Cardiac septum (tissue), 1 donor: ENCODE measurements at regions of chr12 and their contacts with region 1.

Region 1: DNA sequence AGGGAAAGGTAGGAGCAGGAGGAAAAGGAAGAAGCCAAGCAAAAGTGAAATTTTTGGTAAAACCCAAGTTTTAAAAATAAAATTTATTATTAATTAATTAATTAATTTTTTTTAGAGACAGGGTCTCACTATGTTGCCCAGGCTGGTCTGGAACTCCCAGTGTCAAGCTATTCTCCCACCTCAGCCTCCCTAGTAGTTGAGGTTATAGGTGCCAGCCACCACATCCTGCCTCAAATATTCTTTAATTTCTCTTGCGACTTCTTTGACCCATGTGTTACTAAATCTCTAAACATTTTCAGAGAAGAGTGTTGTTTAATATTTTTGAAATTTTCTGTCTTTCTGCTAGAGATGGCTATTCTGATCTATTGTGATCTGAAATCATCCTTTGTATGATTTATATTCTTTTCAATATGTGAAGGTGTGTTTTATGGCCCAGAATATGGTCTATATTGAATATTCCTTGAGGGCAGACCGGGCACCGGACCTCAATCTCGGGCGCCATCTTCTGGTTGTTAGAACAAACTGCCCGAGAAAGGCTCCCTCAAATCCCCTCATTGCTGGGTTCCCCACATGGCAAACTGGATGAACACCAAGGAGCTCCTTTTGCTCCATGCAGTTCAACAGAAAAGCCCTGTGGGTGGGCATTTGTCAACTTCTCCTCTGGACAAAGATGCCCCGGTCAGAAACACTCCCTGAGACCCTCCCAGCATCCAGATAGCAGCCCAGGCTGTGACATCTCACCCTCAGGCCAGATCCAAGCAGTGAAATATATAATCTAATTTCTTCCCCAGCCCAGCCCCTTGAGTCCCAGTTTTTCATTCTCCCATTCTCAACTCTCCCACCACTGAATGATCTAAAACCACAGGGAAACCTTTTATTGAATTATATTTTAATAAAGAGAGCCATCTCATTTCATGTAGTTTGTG is 110.5 kb downstream of the ASCL4 start:
- DNase-seq: no peak

Region 2: DNA sequence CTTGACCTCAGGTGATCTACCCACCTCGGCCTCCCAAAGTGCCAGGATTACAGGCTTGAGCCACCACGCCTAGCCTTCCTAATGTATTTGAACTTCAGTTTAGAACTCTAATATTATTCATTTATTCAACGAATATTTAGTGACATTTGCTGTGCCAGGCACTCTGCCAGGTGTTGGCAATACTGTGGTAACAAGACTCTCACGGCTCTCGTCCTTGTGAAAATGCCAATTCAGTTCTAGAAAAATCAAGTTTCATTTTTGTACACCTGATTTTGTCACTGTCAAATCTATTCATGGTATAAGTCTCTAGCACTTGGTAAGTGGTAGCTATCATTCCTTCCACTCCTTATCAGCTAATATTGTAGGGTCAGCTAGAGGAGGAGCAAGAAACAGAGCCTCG is 205.7 kb before region 1 on chr12:
- intact Hi-C with region 1: loop called (anchors 5 kb)
- DNase-seq: no peak